OCI-LY7 (cell line): ENCODE measurements at regions of chr5 and their contacts with region 1.

Region 1: GRCh38 chr5:35926389-35927051 is 11.9 kb downstream of the CAPSL start:
- DNase-seq: peak; percentile 80
- H3K4me3 ChIP-seq: no peak overlapping the region
- H3K27ac ChIP-seq: no peak overlapping the region
- H3K4me1 ChIP-seq: peaks cover 39% of the 10 kb centered on the region
- CTCF ChIP-seq: peak; percentile 93

Region 2: DNA sequence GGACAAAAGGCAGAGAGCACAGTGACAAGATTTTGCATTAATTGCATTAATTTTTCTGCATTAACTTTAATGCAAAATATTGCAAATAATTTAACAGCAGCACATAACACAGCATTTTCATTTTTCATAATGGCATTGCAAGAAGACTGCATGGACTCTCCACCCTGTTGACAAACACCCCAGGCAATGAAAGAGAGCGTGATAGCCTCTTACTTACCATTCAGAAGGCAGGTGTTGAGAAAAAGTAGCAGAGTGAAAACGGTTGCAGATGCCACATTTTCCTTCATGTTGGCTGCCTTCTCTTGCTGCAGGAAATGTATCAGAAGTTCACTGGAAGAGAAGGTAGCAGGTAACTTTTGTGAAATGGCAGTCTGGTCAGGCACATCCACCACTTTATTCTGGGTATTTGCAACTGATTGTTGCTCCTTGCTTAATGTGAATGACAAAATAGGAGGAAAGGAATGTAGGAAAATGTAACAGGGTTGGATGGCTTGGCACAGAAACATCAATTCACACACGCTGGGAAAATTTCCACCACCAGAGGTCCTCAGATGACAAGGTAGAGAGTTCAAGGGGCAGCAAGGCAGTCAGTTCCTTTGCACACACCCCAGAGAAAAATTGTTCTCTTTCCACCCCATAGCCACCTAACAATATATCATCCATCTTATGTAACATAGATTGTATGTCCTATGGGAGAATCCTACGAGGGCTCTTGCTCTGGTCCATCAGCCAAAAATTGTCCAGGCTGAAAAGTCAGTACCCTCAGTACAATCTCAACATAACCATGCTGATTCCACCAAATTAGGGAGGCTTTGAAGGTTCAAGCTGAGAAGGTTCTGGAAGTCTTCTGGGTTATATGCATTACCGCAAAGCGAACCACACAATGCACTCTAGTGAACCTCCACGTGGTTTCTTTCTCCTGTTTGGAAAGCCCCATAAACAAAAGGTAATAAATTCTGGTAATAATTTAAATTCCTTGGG is 836.9 kb before region 1 on chr5:
- CTCF ChIA-PET with region 1: no interaction called
- POLR2A ChIA-PET with region 1: no interaction called
- intact Hi-C with region 1: loop called (anchors 1 kb)
- DNase-seq: peak; percentile 56
- H3K4me3 ChIP-seq: no peak overlapping the region
- H3K27ac ChIP-seq: no peak overlapping the region
- H3K4me1 ChIP-seq: no peaks in the 10 kb centered on the region
- CTCF ChIP-seq: peak; percentile 86

Region 3: GRCh38 chr5:35470866-35471265 is 455.7 kb before region 1 on chr5:
- CTCF ChIA-PET with region 1: no interaction called
- POLR2A ChIA-PET with region 1: no interaction called
- intact Hi-C with region 1: no loop called
- DNase-seq: no peak
- H3K4me3 ChIP-seq: no peak overlapping the region
- H3K27ac ChIP-seq: no peak overlapping the region
- H3K4me1 ChIP-seq: no peaks in the 10 kb centered on the region
- CTCF ChIP-seq: no peak

Region 4: DNA sequence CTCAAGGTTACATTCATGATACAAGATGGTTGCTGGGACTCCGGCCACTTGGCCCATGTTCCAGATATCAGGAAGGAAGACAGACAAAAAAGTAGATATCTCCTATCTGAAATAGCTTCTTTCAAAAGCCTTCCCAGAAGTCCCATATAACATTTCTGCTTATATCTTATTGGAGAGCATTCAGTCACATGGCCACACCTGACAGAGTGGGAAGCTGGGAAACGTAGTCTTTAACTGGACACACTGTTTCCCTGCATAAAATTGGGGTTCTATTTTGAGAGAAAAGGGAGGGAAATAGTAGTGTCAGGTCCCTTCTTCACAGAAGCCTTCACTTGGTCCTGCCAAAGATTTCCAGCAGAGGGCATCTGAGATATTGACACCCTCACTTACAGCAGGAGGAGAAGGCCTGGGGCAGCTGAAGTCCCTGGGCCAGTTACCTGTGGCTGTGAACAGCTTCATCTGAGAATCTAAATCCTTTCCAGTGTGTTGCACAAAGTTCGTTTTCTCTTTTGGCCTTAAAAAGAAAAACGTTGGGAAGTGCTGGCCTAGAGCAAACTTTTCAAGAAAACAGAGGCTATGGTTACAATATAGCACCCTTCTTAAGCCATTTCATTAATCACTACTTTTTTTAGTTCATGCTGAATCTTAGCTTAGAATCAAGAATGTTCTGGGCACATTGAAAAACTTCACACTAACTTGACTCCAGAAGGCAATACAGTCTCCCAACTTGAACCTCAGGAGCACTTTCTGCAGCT is 275.3 kb before region 1 on chr5:
- CTCF ChIA-PET with region 1: interaction called, 9 read pairs
- POLR2A ChIA-PET with region 1: interaction called, 3 read pairs
- intact Hi-C with region 1: loop called (anchors 1 kb)
- DNase-seq: peak; percentile 83
- H3K4me3 ChIP-seq: no peak overlapping the region
- H3K27ac ChIP-seq: no peak overlapping the region
- H3K4me1 ChIP-seq: peaks cover 20% of the 10 kb centered on the region
- CTCF ChIP-seq: peak; percentile 90

Region 5: GRCh38 chr5:35717718-35718117 is 208.8 kb before region 1 on chr5:
- CTCF ChIA-PET with region 1: no interaction called
- POLR2A ChIA-PET with region 1: no interaction called
- intact Hi-C with region 1: loop called (anchors 5 kb)
- DNase-seq: no peak
- H3K4me3 ChIP-seq: no peak overlapping the region
- H3K27ac ChIP-seq: no peak overlapping the region
- H3K4me1 ChIP-seq: no peaks in the 10 kb centered on the region
- CTCF ChIP-seq: peak; percentile 53

Region 6: GRCh38 chr5:35884115-35884788 is 42.3 kb before region 1 on chr5:
- CTCF ChIA-PET with region 1: interaction called, 3 read pairs
- POLR2A ChIA-PET with region 1: interaction called, 3 read pairs
- intact Hi-C with region 1: loop called (anchors 1 kb)
- DNase-seq: peak; percentile 98
- H3K4me3 ChIP-seq: peak overlapping the region; percentile 19
- H3K27ac ChIP-seq: peak overlapping the region; percentile 100
- H3K4me1 ChIP-seq: peaks cover 95% of the 10 kb centered on the region
- CTCF ChIP-seq: no peak

Region 7: GRCh38 chr5:36045895-36046294 is 119.4 kb after region 1 on chr5:
- CTCF ChIA-PET with region 1: no interaction called
- POLR2A ChIA-PET with region 1: no interaction called
- intact Hi-C with region 1: no loop called
- DNase-seq: no peak
- H3K4me3 ChIP-seq: no peak overlapping the region
- H3K27ac ChIP-seq: no peak overlapping the region
- H3K4me1 ChIP-seq: no peaks in the 10 kb centered on the region
- CTCF ChIP-seq: no peak

Region 8: GRCh38 chr5:36168737-36169136 is 242.2 kb after region 1 on chr5:
- CTCF ChIA-PET with region 1: no interaction called
- POLR2A ChIA-PET with region 1: no interaction called
- intact Hi-C with region 1: no loop called
- DNase-seq: no peak
- H3K4me3 ChIP-seq: no peak overlapping the region
- H3K27ac ChIP-seq: no peak overlapping the region
- H3K4me1 ChIP-seq: no peaks in the 10 kb centered on the region
- CTCF ChIP-seq: no peak

Region 9: GRCh38 chr5:36285837-36286615 is 359.5 kb after region 1 on chr5:
- CTCF ChIA-PET with region 1: no interaction called
- POLR2A ChIA-PET with region 1: no interaction called
- intact Hi-C with region 1: no loop called
- DNase-seq: no peak
- H3K4me3 ChIP-seq: no peak overlapping the region
- H3K27ac ChIP-seq: no peak overlapping the region
- H3K4me1 ChIP-seq: peaks cover 7% of the 10 kb centered on the region
- CTCF ChIP-seq: no peak